ENCODE measurements at regions of chr6 and their contacts with region 1.

Region 1: DNA sequence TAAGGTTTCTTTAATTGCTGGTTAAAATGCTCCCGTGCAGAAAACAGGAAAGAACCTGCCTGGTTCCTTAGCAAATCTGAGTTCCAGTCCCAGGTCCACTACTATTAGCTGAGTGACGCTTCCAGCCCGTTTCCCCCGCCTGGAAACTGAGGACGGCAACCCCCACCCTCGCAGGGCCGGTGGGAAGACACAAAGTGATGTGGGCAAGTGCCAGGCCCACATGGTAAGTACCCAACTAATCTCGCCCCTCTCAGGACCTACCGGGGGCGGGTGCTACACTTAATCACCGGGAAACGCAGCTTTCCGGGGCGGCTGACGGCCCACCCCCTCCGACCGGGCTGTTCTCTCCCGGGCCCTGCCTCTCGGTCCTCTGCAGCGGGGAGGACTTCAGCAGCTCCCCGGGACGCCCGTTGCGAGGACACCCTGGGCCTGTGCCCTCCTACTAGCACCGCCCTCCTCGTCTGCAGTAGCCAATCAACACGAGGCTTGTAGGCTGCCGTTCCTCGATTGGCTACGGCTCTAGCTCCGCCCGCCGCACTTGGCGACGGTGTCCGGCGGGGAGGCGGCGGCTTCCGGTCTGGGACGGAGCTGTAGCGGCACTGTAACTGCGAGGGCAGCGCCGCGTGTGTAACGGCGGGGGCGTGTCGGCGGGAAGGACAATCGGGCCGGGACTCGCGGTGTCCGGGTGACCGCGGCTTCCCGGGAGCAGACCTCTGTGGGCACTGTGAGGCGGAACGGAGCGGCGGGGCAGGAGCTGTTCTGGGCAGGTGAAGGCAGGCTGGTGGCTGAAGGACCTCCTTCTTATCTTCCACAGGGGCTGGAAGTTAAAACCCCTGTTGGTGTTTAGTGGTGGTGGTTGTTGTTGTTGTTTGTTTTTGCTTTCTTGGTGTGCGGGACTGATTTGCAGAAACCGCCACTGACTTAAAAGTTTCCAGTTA is at the start of gene ZBTB9:
- DNase-seq: peak; percentile 97
- H3K4me3 ChIP-seq: peak within 1 kb of the TSS; percentile 47 to 84
- H3K27ac ChIP-seq: peak within 1 kb of the TSS; percentile 60 to 77
- H3K4me1 ChIP-seq: no peaks in the 10 kb centered on the region
- H3K27me3 ChIP-seq: no peaks in the 10 kb centered on the region
- CTCF ChIP-seq: peak in 2 of 4 experiments; percentile 13 to 33
- POLR2A ChIP-seq: peak; percentile 85
- total RNA-seq, gene ZBTB9: 3.5 to 8.9 TPM

Region 2: GRCh38 chr6:33391278-33391921 is 62.9 kb before region 1 on chr6 and contains the start of gene KIFC1:
- intact Hi-C with region 1: loop called (anchors 2 kb)
- DNase-seq: peak; percentile 99
- H3K4me3 ChIP-seq: peak within 1 kb of the TSS; percentile 25 to 41
- H3K27ac ChIP-seq: peak within 1 kb of the TSS; percentile 92
- H3K4me1 ChIP-seq: no peaks in the 10 kb centered on the region
- H3K27me3 ChIP-seq: no peaks in the 10 kb centered on the region
- CTCF ChIP-seq: peak; percentile 97 to 99 (median 99)
- POLR2A ChIP-seq: peak; percentile 40
- total RNA-seq, gene KIFC1: 5.8 to 6.5 TPM

Region 3: DNA sequence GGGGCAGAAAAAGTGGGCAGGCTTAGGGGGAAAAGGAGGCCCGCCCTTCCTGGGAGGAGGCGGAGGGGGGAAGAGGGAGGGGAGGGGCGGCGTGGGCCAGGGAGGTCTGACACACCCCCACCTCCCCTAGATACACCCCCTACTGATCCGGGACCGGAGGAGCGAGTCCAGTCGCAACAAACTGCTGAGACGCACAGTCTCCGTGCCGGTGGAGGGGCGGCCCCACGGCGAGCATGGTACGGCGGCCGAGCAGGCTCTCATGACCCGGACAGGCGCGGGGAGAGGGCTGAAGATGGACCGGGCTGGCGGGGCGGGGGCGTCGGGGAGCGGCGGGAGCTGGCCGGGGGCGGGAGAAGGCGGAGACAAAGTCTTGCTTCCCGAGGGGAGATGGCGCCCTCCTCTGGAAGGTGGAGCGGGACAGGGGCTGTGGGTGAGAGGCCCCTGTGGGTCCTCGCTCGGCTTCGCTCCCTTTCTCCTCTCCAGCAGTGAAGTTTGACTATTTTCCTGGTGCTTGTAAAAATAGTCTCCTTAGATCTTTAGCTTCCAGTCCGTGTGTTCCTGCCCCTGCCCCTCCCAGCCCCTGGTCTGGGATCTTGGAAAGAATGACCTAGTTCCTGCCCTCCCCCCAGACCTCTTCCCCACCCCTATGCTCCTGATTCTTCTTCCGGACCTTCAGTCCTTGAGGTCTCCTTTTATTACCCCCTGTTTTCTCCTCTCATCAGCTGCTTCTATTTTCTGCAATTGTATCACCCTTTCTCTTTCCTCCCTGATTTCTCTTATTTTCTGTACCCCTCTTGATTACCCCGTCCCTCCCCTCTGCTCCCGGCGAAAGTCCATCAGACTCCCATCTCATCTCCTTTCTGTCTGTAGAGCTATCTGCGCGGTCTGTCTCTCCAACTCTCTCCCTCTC is 28.4 kb before region 1 on chr6:
- intact Hi-C with region 1: loop called (anchors 2 kb)
- DNase-seq: peak; percentile 85
- H3K4me3 ChIP-seq: peak overlapping the region; percentile 48 to 53
- H3K27ac ChIP-seq: peak overlapping the region; percentile 94 to 95
- H3K4me1 ChIP-seq: peaks cover 4% of the 10 kb centered on the region
- H3K27me3 ChIP-seq: no peaks in the 10 kb centered on the region
- CTCF ChIP-seq: peak; percentile 49 to 70 (median 62)
- POLR2A ChIP-seq: no peak

Region 4: DNA sequence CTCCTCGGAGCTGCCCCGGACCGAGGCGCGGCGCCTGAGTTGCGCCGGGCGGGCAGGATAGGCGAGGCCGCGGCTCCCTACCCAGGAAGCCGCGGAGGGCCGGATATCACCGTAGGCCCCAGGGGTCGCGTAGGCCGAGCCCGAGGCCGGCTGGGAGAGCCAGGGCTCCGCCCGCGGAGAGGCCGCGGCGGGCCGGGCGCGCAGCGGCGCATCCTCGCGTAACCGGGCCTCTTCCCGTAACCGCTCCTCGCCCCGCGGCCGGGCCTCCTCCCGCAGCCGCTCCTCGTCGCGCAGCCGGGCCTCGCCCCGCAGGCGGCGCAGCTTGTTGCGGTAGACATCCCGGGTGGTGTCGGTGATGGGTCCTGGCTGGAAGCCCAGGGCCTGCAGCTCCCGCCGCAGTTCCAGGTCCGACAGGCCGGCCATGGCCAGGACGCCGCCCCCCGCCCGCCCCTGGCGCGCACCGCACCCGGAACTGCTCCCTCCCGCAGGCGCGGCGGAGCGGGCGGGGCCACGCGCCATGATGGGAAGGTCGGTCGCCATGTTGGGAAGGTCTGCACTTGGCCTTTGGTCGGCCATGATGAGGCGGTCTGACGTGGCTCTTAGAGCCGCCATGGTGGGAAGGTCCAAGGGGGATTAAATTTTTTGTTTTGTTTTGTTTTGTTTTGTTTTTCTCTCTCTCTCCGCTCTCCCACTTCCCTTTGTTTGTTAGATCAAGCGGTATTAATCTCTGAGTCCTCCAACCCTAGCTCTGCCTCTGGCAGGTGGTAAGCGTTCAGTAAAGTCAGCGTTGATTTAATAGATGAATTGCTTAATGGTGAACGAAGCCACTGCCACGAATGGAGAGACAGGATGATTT is 334.6 kb after region 1 on chr6 and contains the start of gene LEMD2:
- intact Hi-C with region 1: loop called (anchors 10 kb)
- DNase-seq: peak; percentile 87
- H3K4me3 ChIP-seq: peak within 1 kb of the TSS; percentile 85 to 91
- H3K27ac ChIP-seq: peak within 1 kb of the TSS; percentile 90 to 97
- H3K4me1 ChIP-seq: peaks cover 12% of the 10 kb centered on the region
- H3K27me3 ChIP-seq: no peaks in the 10 kb centered on the region
- CTCF ChIP-seq: peak in 1 of 4 experiments; percentile 31
- POLR2A ChIP-seq: peak; percentile 96
- total RNA-seq, gene LEMD2: 64.2 to 80.2 TPM

Measured in prostate gland (tissue), 2 donors.